Head of caudate nucleus (tissue), 42 donors: ENCODE measurements at regions of chr5 and their contacts with region 1.

Region 1: DNA sequence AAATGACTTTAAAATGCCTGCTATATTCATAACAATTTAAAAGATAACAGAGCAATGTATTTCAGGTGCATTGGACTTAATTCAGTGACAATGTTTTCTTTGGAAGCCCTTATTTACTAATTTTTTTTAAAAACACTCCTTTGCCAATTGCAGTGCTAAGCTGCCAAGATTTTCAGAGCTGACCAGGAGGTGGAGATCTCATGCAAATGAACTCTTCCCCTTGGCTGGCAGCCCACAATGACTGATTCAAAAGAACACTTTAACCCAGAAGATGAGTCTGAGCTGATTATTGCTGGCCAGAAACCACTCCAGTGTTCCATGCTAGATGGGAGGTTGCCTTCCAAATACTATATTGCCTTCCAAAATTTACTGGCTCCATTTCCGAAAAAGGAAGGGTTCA is 128.3 kb upstream of the CCNH start:
- DNase-seq: peak; percentile 43 to 97 (median 86)

Region 2: GRCh38 chr5:86968301-86968753 is 572.7 kb before region 1 on chr5:
- intact Hi-C with region 1: no loop called
- DNase-seq: peak in 34 of 42 donors; percentile 2 to 48 (median 14)

Region 3: GRCh38 chr5:87608385-87608784 is 67.4 kb after region 1 on chr5:
- intact Hi-C with region 1: no loop called
- DNase-seq: no peak

Region 4: GRCh38 chr5:87627363-87627762 is 86.3 kb after region 1 on chr5:
- intact Hi-C with region 1: no loop called
- DNase-seq: no peak

Region 5: DNA sequence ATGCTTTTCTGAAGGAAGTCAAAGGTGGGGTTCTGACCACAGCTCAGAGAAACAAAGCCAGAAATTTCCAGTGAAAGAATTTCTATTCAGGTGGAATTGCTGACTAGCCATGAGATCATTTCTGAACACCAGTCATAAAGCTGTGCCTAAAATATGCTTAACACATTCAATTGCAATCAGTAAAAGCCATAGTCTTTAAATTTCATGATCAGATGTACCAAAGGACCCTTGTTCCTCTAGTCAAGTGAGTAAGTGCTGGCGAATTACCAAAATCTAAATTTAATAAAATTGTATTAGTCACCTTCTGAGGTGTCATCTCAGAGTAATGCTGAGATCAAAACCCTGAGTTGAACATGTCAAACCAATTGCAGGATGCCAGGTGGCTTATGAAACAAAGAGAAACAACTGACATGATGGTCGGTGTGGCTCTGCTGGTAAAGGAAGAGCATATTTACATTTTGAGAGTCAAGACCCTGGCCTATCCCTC is 205.9 kb after region 1 on chr5:
- intact Hi-C with region 1: loop called (anchors 10 kb)
- DNase-seq: no peak